ENCODE measurements at regions of chr16 and their contacts with region 1.

Region 1: DNA sequence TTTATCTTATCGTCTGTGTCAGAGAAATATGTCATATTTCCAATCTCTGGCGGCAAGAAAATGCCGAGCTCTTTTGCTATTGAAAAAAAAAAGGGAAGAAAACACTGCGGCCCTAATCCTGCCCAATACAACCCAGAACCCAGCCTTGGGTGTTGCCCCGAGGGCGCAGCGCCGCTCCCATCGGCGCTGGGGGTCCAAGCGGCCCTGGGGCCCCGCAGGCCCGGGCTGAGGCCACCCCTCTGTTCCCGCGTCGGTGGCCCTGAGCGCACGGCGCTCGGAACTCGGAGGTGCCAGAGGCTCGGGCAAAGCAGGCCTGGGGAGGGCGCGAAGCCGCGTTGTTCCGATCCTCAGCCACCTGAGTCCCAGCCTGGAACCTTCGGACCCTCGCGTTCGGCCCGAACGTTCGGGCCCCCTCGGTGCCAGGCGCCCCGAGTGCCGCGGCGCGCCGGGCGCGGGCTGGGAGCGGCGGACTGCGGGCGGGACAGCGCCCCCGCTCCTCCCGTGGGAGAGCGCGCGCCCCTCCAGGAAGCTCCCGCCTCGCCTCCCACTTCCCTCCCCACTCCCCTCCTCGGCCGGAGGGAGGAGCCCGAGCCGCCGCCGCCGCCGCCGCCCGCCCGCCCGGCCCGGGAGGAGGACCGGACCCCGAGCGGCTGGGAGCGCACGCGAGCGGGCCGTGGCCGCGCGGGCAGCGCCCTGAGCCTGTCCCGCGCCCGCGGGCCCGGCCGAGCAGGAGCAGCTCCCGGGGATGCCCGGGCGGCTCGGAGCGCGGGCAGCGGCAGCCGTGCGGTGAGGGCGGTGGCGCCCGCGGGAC is at the start of gene CPNE2:
- DNase-seq: peak; percentile 42
- ATAC-seq: peak; percentile 35
- H3K4me3 Mint-ChIP-seq: peak within 1 kb of the TSS; percentile 86
- H3K27ac Mint-ChIP-seq: no peak within 1 kb of the TSS
- H3K4me1 Mint-ChIP-seq: peaks cover 14% of the 10 kb centered on the region
- H3K27me3 Mint-ChIP-seq: peaks cover 25% of the 10 kb centered on the region
- CTCF ChIP-seq: no peak
- total RNA-seq, gene CPNE2: 14.0 to 17.9 TPM (median 16.7 TPM) in 3 replicates

Region 2: GRCh38 chr16:56964243-56965148 is 127.7 kb before region 1 on chr16:
- CTCF ChIA-PET with region 1: interaction called, 16 read pairs
- POLR2A ChIA-PET with region 1: no interaction called
- DNase-seq: peak; percentile 98
- ATAC-seq: peak; percentile 91
- H3K4me3 Mint-ChIP-seq: peak overlapping the region; percentile 18; the same call in 1 of the 2 replicates
- H3K27ac Mint-ChIP-seq: no peak overlapping the region
- H3K4me1 Mint-ChIP-seq: peaks cover 7% of the 10 kb centered on the region
- H3K27me3 Mint-ChIP-seq: no peaks in the 10 kb centered on the region
- CTCF ChIP-seq: peak; percentile 95

Region 3: GRCh38 chr16:57106767-57107166 is 14.6 kb after region 1 on chr16:
- CTCF ChIA-PET with region 1: interaction called, 68 read pairs
- POLR2A ChIA-PET with region 1: interaction called, 4 read pairs
- DNase-seq: no peak
- ATAC-seq: no peak
- H3K4me3 Mint-ChIP-seq: no peak overlapping the region
- H3K27ac Mint-ChIP-seq: no peak overlapping the region
- H3K4me1 Mint-ChIP-seq: peaks cover 39% of the 10 kb centered on the region
- H3K27me3 Mint-ChIP-seq: no peaks in the 10 kb centered on the region
- CTCF ChIP-seq: no peak

Region 4: DNA sequence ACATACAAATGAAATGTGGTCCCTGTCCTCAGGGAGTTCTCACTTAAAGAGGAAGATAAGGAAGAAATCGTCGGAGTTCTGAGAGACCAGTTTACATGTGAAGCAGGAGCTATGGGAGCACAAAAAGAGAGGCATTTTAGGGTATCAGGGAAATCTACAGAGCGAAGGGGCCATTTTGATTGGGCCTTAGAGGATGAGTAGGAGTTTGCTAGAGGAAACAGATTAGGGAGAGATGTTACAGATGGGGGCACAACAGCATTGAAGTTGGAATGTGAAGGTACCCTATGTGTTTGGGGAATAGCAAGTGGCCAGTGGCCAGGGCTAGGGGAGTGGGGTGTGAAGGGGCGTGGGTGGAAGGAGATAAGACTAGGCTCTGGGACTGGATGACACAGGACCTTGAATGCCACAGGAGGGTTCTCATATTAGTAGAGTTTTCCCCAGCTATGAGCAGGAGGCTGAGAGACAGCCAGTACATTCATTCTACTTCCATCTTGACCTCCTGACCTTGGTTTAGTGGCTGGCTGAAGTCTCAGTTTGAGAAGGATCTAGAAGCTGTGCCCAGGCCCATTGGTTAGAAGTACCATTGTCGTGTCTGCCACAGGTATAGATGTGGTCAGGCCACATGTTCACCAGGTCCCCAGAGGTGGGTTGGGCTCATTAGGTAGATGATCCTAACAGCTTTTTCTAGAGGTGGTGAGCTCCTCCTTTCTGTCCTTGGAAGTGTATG is 35.0 kb after region 1 on chr16:
- CTCF ChIA-PET with region 1: interaction called, 14 read pairs
- POLR2A ChIA-PET with region 1: no interaction called
- DNase-seq: no peak
- ATAC-seq: no peak
- H3K4me3 Mint-ChIP-seq: no peak overlapping the region
- H3K27ac Mint-ChIP-seq: no peak overlapping the region
- H3K4me1 Mint-ChIP-seq: peaks cover 6% of the 10 kb centered on the region; the same call in 1 of the 2 replicates
- H3K27me3 Mint-ChIP-seq: no peaks in the 10 kb centered on the region
- CTCF ChIP-seq: no peak

Region 5: GRCh38 chr16:57147381-57148221 is 55.4 kb after region 1 on chr16:
- CTCF ChIA-PET with region 1: interaction called, 56 read pairs
- POLR2A ChIA-PET with region 1: no interaction called
- DNase-seq: no peak
- ATAC-seq: peak; percentile 25
- H3K4me3 Mint-ChIP-seq: peak overlapping the region; percentile 33; the same call in 1 of the 2 replicates
- H3K27ac Mint-ChIP-seq: peak overlapping the region; percentile 97
- H3K4me1 Mint-ChIP-seq: peaks cover 67% of the 10 kb centered on the region
- H3K27me3 Mint-ChIP-seq: no peaks in the 10 kb centered on the region
- CTCF ChIP-seq: no peak

Region 6: DNA sequence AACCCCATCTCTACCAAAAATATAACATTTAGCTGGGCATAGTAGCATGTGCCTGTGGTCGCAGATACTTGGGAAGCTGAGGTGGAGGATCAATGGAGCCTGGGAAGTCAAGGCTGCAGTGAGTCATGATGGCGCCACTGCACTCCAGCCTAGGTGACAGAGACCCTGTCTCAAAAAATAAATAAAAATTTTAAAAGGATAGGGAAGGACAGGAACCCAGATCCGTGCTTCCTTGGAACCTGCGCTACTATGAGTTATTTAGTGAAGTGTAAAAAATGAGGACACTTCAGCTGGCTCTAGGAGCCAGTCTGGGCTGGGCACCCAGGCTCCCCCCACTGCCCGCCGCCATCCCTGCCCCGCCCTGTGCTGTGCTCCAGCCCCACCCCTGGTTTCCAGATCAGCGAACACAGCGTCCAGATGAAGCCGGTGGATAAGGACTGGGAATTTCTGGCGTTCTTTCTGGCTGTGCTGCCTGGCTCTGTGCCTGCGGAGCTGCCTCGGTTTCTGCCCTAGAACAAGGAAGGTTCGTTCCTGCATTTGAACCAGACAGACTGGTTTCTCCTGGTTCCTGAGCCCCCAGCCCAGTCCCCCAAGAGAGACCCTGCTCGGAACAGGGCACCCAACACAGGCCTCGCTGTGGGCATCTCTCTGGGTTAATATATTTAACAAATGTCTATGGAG is 173.8 kb after region 1 on chr16:
- CTCF ChIA-PET with region 1: no interaction called
- POLR2A ChIA-PET with region 1: no interaction called
- DNase-seq: no peak
- ATAC-seq: no peak; the same call in 1 of the 2 replicates
- H3K4me3 Mint-ChIP-seq: no peak overlapping the region
- H3K27ac Mint-ChIP-seq: no peak overlapping the region
- H3K4me1 Mint-ChIP-seq: peaks cover 8% of the 10 kb centered on the region
- H3K27me3 Mint-ChIP-seq: no peaks in the 10 kb centered on the region
- CTCF ChIP-seq: no peak

Measured in WTC11 (cell line).